GM12878 (cell line): ENCODE measurements at regions of chr9 and their contacts with region 1.

Region 1: DNA sequence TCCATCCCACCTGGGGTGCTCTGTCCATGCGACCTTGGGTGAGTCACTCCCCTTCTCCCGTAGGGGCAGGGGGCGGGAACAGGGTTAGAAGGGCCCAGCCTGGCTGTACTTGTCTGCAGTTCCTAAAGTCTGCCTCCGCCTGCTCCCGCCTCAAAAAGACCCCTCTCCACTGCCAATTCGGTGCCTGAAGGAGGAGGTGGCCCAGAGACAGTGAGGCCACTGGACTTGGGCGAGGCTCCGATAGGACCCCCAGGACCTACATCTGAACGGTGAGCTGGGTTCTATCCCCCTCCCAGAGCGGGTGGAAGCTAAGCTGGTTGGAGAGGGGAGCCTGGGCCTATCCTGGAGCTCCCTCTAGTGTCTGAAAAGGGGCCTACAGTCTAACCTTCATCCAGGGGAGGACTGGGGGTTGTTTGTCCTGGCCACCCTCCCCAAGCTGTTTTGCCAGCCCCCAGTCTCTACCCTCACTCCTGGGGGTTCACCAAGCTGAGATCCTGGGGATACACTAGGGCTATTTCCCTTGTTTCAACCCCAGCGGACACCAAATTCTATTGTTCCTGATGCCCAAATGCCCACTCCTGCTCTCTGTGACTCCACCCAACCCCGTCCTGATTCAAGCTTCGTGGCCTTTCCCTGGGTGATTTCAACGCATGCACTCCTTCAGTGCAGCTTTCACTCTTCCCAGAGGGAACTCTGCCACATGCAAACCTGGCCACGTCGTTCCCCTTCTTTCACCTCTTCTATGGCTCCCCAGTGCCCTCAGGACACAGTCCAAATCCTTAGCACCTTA is 6.1 kb upstream of the CRB2 start:
- DNase-seq: no peak
- ATAC-seq: peak; percentile 83
- H3K4me3 ChIP-seq: no peak overlapping the region
- H3K27ac ChIP-seq: no peak overlapping the region
- H3K4me1 ChIP-seq: peaks cover 14% of the 10 kb centered on the region
- H3K27me3 ChIP-seq: no peaks in the 10 kb centered on the region; a peak in 1 of 4 replicates
- CTCF ChIP-seq: peak; percentile 95 to 98 (median 97); a peak in 5 of 6 replicates
- EP300 ChIP-seq: no peak
- POLR2A ChIP-seq: no peak
- RAD21 ChIP-seq: peak; percentile 99

Region 2: DNA sequence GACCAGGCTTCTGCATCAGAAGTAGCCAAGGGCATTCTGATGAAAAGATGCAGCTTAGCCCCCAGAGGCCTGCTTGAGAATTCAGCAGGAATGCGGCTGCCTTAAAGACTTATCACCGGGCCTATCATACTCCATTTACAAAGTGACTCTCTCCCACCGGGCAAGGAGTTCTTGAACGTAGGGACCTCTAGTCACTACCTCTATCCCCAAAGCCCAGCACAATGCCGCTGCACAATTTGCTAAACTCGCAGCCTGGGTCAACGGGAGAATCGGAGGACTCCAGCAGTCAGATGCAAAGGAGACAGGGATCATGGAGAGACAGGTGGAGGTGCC is 522.2 kb before region 1 on chr9:
- CTCF ChIA-PET with region 1: interaction called, 5 read pairs
- POLR2A ChIA-PET with region 1: no interaction called
- RAD21 ChIA-PET with region 1: no interaction called
- SMC1A ChIA-PET with region 1: no interaction called
- in situ Hi-C with region 1: loop called (anchors 5 kb)
- intact Hi-C with region 1: loop called (anchors 10 kb)
- DNase-seq: no peak
- ATAC-seq: peak; percentile 18
- H3K4me3 ChIP-seq: peak overlapping the region; percentile 100
- H3K27ac ChIP-seq: peak overlapping the region; percentile 96
- H3K4me1 ChIP-seq: no peaks in the 10 kb centered on the region
- H3K27me3 ChIP-seq: no peaks in the 10 kb centered on the region
- CTCF ChIP-seq: no peak
- EP300 ChIP-seq: no peak
- POLR2A ChIP-seq: no peak
- RAD21 ChIP-seq: no peak

Region 3: GRCh38 chr9:122991370-122991830 is 358.5 kb before region 1 on chr9:
- CTCF ChIA-PET with region 1: interaction called, 13 read pairs
- POLR2A ChIA-PET with region 1: no interaction called
- RAD21 ChIA-PET with region 1: interaction called, 7 read pairs
- SMC1A ChIA-PET with region 1: interaction called, 4 read pairs
- in situ Hi-C with region 1: no loop called
- intact Hi-C with region 1: loop called (anchors 10 kb)
- DNase-seq: peak; percentile 23
- ATAC-seq: peak; percentile 84
- H3K4me3 ChIP-seq: no peak overlapping the region
- H3K27ac ChIP-seq: no peak overlapping the region
- H3K4me1 ChIP-seq: no peaks in the 10 kb centered on the region
- H3K27me3 ChIP-seq: no peaks in the 10 kb centered on the region
- CTCF ChIP-seq: peak; percentile 57 to 64 (median 60)
- EP300 ChIP-seq: no peak
- POLR2A ChIP-seq: no peak
- RAD21 ChIP-seq: peak; percentile 76

Region 4: GRCh38 chr9:123091459-123091858 is 258.4 kb before region 1 on chr9:
- CTCF ChIA-PET with region 1: interaction called, 32 read pairs
- POLR2A ChIA-PET with region 1: interaction called, 3 read pairs
- RAD21 ChIA-PET with region 1: interaction called, 16 read pairs
- SMC1A ChIA-PET with region 1: interaction called, 12 read pairs
- in situ Hi-C with region 1: no loop called
- intact Hi-C with region 1: no loop called
- DNase-seq: no peak
- ATAC-seq: no peak
- H3K4me3 ChIP-seq: no peak overlapping the region
- H3K27ac ChIP-seq: no peak overlapping the region
- H3K4me1 ChIP-seq: peaks cover 8% of the 10 kb centered on the region
- H3K27me3 ChIP-seq: no peaks in the 10 kb centered on the region
- CTCF ChIP-seq: peak in 2 of 3 experiments; percentile 6 to 15; a peak in 2 of 6 replicates
- EP300 ChIP-seq: no peak
- POLR2A ChIP-seq: no peak
- RAD21 ChIP-seq: 0 out of 2 replicates have a peak, but pooled peaks have one; percentile 10

Region 5: DNA sequence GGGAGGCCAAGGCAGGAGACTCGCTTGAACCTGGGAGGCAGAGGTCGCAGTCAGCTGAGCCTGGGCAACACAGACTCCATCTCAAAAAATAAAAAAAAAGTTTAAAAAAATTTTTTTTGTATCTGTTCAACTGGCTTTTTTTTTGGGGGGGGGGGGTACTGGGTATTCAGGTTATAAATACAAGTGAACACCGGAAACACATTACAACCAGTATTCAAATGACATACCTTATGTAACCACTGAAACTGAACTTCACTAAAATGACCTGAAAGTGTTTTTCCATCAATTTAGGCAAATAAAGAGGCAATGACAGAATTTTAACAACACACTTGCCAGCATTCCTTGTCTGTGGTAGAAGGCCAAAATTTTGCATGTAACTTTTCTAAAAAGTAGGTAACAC is 115.0 kb before region 1 on chr9:
- CTCF ChIA-PET with region 1: interaction called, 12 read pairs
- POLR2A ChIA-PET with region 1: interaction called, 3 read pairs
- RAD21 ChIA-PET with region 1: interaction called, 6 read pairs
- SMC1A ChIA-PET with region 1: interaction called, 17 read pairs
- in situ Hi-C with region 1: no loop called
- intact Hi-C with region 1: no loop called
- DNase-seq: peak; percentile 51
- ATAC-seq: peak; percentile 84
- H3K4me3 ChIP-seq: peak overlapping the region; percentile 28; the same call in 1 of the 2 replicates
- H3K27ac ChIP-seq: peak overlapping the region; percentile 80
- H3K4me1 ChIP-seq: peaks cover 34% of the 10 kb centered on the region
- H3K27me3 ChIP-seq: no peaks in the 10 kb centered on the region
- CTCF ChIP-seq: no peak
- EP300 ChIP-seq: peak in 1 of 2 experiments; percentile 18; a peak in 1 of 4 replicates
- POLR2A ChIP-seq: no peak
- RAD21 ChIP-seq: no peak

Region 6: GRCh38 chr9:123360161-123361085 is 10.5 kb after region 1 on chr9:
- CTCF ChIA-PET with region 1: interaction called, 23 read pairs
- POLR2A ChIA-PET with region 1: no interaction called
- RAD21 ChIA-PET with region 1: interaction called, 5 read pairs
- SMC1A ChIA-PET with region 1: no interaction called
- in situ Hi-C with region 1: no loop called
- intact Hi-C with region 1: no loop called
- DNase-seq: no peak
- ATAC-seq: peak; percentile 77
- H3K4me3 ChIP-seq: no peak overlapping the region
- H3K27ac ChIP-seq: no peak overlapping the region
- H3K4me1 ChIP-seq: peaks cover 17% of the 10 kb centered on the region
- H3K27me3 ChIP-seq: no peaks in the 10 kb centered on the region; a peak in 1 of 4 replicates
- CTCF ChIP-seq: no peak
- EP300 ChIP-seq: no peak
- POLR2A ChIP-seq: no peak
- RAD21 ChIP-seq: no peak

Region 7: GRCh38 chr9:123611226-123611625 is 261.3 kb after region 1 on chr9:
- CTCF ChIA-PET with region 1: no interaction called
- POLR2A ChIA-PET with region 1: no interaction called
- RAD21 ChIA-PET with region 1: no interaction called
- SMC1A ChIA-PET with region 1: no interaction called
- in situ Hi-C with region 1: no loop called
- intact Hi-C with region 1: no loop called
- DNase-seq: no peak
- ATAC-seq: no peak
- H3K4me3 ChIP-seq: no peak overlapping the region
- H3K27ac ChIP-seq: no peak overlapping the region
- H3K4me1 ChIP-seq: peaks cover 18% of the 10 kb centered on the region
- H3K27me3 ChIP-seq: no peaks in the 10 kb centered on the region
- CTCF ChIP-seq: no peak
- EP300 ChIP-seq: no peak
- POLR2A ChIP-seq: no peak
- RAD21 ChIP-seq: no peak